Left ventricle myocardium superior (tissue), 1 donor: ENCODE measurements at regions of chr3 and their contacts with region 1.

Region 1: DNA sequence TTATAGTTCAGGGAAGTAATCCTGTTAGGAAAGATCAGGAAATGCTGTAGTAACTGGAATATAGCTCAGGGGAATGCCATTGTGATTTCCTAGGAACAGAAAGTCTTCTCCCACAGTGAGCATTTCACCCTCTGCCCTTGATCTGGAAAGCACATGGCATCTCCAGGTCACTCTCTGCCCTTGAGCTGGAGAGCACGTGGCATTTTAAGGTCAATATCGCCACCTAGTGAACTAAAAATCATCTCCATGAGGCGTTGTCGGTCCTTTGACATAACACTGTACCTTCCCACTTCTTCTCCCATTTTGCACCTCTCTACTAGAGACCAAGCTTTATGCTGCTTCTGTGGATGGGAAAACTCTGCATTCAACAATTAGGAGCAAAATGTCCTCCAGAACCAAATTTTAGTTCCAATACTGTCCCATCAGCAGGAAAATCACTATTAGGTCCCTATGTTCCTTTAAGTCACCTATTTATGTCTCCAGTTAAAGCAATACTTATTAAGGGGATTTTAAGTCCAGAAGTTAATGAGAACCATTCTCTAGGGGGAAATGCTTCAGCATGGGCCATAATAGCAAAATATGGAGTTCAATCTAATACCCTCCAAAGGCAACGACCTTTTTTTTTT is 54.7 kb upstream of the GK5 start:
- DNase-seq: no peak
- ATAC-seq: peak; percentile 90

Region 2: DNA sequence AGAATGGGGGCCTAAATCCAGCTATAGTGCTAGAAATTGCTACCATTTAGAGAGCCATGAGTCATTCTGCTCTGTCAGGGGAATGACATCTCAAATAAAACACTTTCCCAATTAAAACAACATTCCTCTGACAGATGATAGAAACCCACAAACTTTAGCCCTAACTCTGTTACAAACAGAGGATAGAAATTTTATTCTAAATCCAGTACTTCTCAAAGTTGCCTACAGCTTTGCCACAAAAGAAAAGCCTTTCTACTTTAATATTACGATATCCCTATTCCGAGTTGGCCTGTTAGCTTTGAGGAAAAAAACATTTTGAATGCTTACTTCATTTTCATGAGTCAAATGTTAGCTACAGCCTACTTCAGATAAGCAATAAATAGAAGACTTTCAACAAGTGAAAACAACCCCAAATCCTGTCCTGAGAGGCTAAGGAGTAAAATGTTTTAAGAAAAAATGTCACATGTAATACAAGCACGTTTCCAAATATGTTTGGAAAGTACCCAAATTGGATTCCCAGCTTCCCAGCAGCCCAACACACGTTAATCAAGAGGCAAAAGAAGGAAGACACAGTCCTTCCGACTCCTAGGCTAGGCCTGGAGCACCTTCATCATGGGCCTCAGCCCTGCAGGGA is 320.0 kb before region 1 on chr3:
- intact Hi-C with region 1: loop called (anchors 10 kb)
- DNase-seq: no peak
- ATAC-seq: peak; percentile 59

Region 3: DNA sequence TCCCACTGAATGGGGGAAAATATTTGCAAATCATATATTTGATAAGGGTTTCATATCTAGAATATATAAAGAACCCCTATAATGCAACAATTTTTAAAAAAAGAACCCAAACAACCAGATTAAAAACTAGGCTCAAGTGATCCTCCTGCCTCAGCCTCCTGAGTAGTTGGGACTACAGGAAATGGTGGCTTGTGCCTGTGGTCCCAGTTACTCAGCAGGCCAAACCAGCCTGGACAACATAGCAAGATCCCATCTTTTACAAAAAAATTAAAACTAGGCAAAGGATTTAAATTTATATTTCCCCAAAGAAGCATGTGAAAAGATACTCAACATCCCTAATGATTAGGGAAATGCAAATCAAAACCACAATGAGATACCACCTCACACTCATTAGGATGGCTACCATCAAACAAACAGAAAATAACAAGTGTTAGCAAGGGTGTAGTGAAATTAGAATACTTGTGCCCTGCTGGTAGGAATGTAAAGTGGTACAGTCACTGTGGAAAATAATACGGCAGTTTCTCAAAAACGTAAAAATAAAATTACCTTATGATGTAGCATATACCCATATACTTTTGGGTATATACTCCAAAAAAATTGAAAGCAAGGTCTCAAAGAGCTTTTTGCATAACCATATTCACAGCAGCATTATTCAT is 150.4 kb before region 1 on chr3:
- intact Hi-C with region 1: loop called (anchors 10 kb)
- DNase-seq: no peak
- ATAC-seq: no peak

Region 4: DNA sequence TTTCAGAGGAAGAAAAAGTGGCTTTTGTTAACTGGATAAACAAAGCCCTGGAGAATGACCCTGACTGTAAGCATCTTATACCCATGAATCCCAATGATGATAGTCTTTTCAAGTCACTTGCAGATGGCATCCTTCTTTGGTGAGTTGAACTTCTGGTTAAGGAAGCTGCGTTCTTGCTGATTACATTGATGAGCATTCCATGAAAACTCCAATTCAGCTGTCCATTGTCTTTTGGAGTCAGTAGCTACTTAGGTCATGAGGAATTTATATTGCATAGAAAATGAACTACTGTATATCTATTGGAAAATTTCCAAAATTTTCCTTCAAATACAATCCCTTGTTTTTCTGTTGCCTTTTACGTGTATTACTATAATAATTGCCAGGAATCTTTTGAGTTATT is 396.1 kb after region 1 on chr3:
- intact Hi-C with region 1: no loop called
- DNase-seq: no peak
- ATAC-seq: no peak